Uterus (tissue), 4 donors: ENCODE measurements at regions of chr20 and their contacts with region 1.

Region 1: GRCh38 chr20:31569163-31570020 is 35.7 kb upstream of the ID1 start:
- DNase-seq: peak; percentile 59 to 62
- H3K4me3 ChIP-seq: no peak overlapping the region
- H3K27ac ChIP-seq: peak overlapping the region; percentile 47 to 68
- H3K4me1 ChIP-seq: peaks cover 0 to 3% of the 10 kb centered on the region in 2 donors
- H3K27me3 ChIP-seq: no peaks in the 10 kb centered on the region
- CTCF ChIP-seq: peak; percentile 73 to 78 (median 76)
- POLR2A ChIP-seq: no peak

Region 2: DNA sequence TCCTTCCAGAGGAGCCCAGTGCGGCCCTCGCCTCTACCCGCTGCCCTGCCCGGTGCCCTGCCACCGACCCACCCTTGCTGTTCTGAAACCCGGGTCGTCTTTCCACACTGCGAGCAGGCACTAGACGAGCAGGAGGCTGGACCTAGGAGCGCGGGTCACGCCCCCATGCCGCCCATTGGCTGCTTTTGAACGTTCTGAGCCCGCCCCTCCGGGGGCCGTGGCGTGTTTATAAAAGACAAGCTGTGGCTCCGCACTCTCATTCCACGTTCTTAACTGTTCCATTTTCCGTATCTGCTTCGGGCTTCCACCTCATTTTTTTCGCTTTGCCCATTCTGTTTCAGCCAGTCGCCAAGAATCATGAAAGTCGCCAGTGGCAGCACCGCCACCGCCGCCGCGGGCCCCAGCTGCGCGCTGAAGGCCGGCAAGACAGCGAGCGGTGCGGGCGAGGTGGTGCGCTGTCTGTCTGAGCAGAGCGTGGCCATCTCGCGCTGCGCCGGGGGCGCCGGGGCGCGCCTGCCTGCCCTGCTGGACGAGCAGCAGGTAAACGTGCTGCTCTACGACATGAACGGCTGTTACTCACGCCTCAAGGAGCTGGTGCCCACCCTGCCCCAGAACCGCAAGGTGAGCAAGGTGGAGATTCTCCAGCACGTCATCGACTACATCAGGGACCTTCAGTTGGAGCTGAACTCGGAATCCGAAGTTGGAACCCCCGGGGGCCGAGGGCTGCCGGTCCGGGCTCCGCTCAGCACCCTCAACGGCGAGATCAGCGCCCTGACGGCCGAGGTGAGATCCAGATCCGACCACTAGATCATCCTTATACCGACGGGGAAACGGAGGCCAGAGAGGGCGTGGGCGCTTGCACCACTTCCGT is 35.9 kb after region 1 on chr20 and contains the start of gene ID1:
- intact Hi-C with region 1: loop called (anchors 5 kb)
- DNase-seq: peak; percentile 92 to 93
- H3K4me3 ChIP-seq: peak within 1 kb of the TSS; percentile 47 to 63
- H3K27ac ChIP-seq: peak within 1 kb of the TSS; percentile 68 to 80
- H3K4me1 ChIP-seq: peaks cover 0 to 5% of the 10 kb centered on the region in 2 donors
- H3K27me3 ChIP-seq: peaks cover 0 to 5% of the 10 kb centered on the region in 2 donors
- CTCF ChIP-seq: no peak
- POLR2A ChIP-seq: peak; percentile 78 to 91
- total RNA-seq, gene ID1: 364 to 646 (median 505) TPM

Region 3: GRCh38 chr20:31620252-31620651 is 50.9 kb after region 1 on chr20:
- intact Hi-C with region 1: no loop called
- DNase-seq: no peak
- H3K4me3 ChIP-seq: no peak overlapping the region
- H3K27ac ChIP-seq: no peak overlapping the region
- H3K4me1 ChIP-seq: no peaks in the 10 kb centered on the region
- H3K27me3 ChIP-seq: no peaks in the 10 kb centered on the region
- CTCF ChIP-seq: no peak
- POLR2A ChIP-seq: no peak